Activated CD8-positive, alpha-beta T cell treated with anti-CD3 and anti-CD28 coated beads, Interleukin-2, amount 10 ng/mL, durations not matched to agents 7 days and 5 days (primary cell): ENCODE measurements at regions of chr3 and their contacts with region 1.

Region 1: DNA sequence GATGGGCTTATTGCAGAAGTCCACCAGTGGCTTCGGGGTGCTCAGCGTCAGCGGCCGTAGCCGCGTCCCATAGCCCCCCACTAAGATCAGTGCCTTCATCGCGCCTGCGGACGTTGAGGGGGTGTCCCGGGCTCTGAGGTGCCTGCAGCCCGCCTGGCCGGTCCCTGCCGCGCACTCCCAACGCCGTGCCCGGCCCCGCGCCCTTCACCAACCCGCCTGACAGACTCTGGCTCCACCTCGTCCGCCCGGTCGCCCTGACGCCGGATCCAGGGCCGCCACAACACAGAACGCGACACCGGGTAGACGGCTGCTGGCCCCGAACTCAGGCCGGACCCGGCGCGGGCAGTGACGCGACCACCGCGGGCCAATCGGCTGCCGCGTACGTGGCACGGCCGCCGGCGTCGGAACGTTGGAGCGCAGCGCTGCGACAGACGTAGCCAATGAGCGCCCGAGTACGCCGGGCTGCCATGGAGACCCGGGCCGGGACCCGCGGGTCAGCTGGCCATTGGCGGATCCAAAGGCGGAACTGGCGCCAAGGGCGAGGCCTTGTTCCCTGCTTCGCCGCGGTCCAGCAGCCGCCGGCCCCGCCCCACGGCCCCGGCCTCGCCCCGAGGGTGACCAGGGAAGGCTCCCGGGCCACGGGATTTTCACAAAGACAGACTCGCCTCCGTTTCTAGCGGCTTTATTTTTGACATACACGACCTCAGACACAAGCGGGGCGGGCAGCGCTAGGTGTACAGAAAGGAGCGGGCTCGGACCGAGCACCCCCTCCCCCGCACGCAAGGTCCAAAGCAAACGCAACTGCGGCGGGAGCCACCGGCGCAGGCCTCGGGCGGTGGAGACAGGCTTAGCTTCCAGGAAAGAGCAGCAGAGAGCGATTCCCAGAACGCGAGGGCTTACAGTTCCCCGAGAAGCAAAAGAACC is at the start of gene GMPPB:
- DNase-seq: peak; percentile 96
- ATAC-seq: peak; percentile 82
- H3K4me3 Mint-ChIP-seq: peak within 1 kb of the TSS; percentile 95
- H3K27ac Mint-ChIP-seq: peak within 1 kb of the TSS; percentile 98
- H3K4me1 Mint-ChIP-seq: peaks cover 32% of the 10 kb centered on the region
- H3K27me3 Mint-ChIP-seq: no peaks in the 10 kb centered on the region
- total RNA-seq, gene GMPPB: 50.4 to 53.0 TPM

Region 2: DNA sequence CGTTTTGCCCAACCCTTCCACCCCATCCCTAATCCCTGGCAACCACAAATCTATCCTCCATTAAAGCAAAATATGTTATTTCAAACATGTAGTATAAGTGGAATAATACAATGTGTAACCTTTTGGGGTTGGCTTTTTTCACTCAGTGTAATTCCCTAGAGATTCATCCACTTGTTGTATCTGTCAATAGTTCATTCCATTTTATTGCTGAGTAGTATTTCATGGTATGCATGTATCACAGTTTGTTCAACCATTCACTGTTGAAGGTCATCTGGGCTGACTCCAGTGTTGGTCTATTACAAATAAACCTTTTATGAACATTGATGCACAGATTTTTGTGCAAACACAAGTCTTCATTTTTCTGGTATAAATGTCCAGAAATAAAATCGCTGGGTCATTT is 130.8 kb before region 1 on chr3:
- CTCF ChIA-PET with region 1: no interaction called
- POLR2A ChIA-PET with region 1: no interaction called
- DNase-seq: no peak
- ATAC-seq: no peak
- H3K4me3 Mint-ChIP-seq: no peak overlapping the region
- H3K27ac Mint-ChIP-seq: no peak overlapping the region
- H3K4me1 Mint-ChIP-seq: peaks cover 4% of the 10 kb centered on the region
- H3K27me3 Mint-ChIP-seq: peaks cover 10% of the 10 kb centered on the region

Region 3: GRCh38 chr3:49703443-49703927 is 20.4 kb before region 1 on chr3:
- CTCF ChIA-PET with region 1: interaction called, 11 read pairs
- POLR2A ChIA-PET with region 1: interaction called, 4 read pairs
- DNase-seq: peak; percentile 79
- ATAC-seq: peak; percentile 96
- H3K4me3 Mint-ChIP-seq: no peak overlapping the region
- H3K27ac Mint-ChIP-seq: no peak overlapping the region
- H3K4me1 Mint-ChIP-seq: no peaks in the 10 kb centered on the region
- H3K27me3 Mint-ChIP-seq: no peaks in the 10 kb centered on the region

Region 4: GRCh38 chr3:49712631-49713319 is 11.1 kb before region 1 on chr3:
- CTCF ChIA-PET with region 1: interaction called, 3 read pairs
- POLR2A ChIA-PET with region 1: interaction called, 13 read pairs
- DNase-seq: peak; percentile 60
- ATAC-seq: peak; percentile 39
- H3K4me3 Mint-ChIP-seq: no peak overlapping the region
- H3K27ac Mint-ChIP-seq: peak overlapping the region; percentile 72
- H3K4me1 Mint-ChIP-seq: peaks cover 31% of the 10 kb centered on the region
- H3K27me3 Mint-ChIP-seq: no peaks in the 10 kb centered on the region